ENCODE measurements at regions of chr22 and their contacts with region 1.

Region 1: DNA sequence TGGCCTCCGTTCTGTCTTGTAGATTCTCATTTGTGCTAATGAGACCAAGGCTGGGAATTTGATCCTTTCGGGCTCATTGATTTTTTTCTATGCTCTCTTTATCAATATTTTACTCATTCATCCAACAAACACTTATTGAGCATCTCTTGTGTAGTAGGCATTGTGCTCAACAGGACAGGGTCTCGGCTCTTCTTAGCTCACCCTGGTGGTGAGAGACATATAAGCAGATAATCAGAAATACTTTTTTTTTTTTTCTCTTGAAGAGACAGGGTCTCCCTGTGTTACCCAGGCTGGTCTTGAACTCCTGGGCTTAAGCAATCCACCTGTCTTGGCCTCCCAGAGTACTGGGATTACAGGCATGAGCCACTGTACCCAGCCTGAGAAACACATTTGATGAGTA is 48.0 kb upstream of the SLC5A1 start:
- DNase-seq: no peak
- ATAC-seq: peak; percentile 67
- H3K4me3 ChIP-seq: no peak overlapping the region
- H3K27ac ChIP-seq: no peak overlapping the region
- H3K4me1 ChIP-seq: no peaks in the 10 kb centered on the region
- H3K27me3 ChIP-seq: no peaks in the 10 kb centered on the region; the same call in 1 of the 2 replicates
- CTCF ChIP-seq: peak in 2 of 3 experiments; percentile 47 to 50; a peak in 4 of 6 replicates
- POLR2A ChIP-seq: no peak
- RAD21 ChIP-seq: no peak

Region 2: DNA sequence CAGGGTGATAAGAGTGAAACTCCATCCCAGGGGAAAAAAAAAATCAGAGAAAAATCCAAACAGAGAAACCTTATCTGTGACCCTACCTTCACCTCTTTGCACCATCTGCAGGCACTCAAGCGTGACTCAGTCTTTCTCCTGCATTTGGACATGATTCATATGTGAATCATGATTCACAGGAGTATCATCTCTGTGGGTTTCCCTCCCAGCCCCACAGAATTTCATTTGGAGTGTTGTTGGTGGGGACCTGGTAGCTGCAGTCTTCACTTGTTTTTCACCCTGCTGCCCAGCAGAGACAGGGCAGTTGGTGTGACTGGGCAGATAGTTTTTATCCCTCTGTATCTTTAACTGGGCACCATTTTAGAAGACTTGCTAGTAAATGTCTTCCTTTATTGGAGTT is 165.5 kb before region 1 on chr22:
- CTCF ChIA-PET with region 1: no interaction called
- POLR2A ChIA-PET with region 1: no interaction called
- RAD21 ChIA-PET with region 1: no interaction called
- intact Hi-C with region 1: no loop called
- DNase-seq: peak; percentile 89
- ATAC-seq: peak; percentile 94
- H3K4me3 ChIP-seq: peak overlapping the region in 1 of 2 experiments; percentile 38; a peak in 2 of 4 replicates
- H3K27ac ChIP-seq: peak overlapping the region; percentile 68
- H3K4me1 ChIP-seq: peaks cover 27 to 28% of the 10 kb centered on the region in 2 experiments
- H3K27me3 ChIP-seq: no peaks in the 10 kb centered on the region
- CTCF ChIP-seq: no peak
- POLR2A ChIP-seq: no peak
- RAD21 ChIP-seq: peak; percentile 23

Region 3: GRCh38 chr22:32158712-32159533 is 163.9 kb after region 1 on chr22 and contains the start of gene C22orf42:
- CTCF ChIA-PET with region 1: no interaction called
- POLR2A ChIA-PET with region 1: no interaction called
- RAD21 ChIA-PET with region 1: no interaction called
- intact Hi-C with region 1: no loop called
- DNase-seq: no peak
- ATAC-seq: no peak
- H3K4me3 ChIP-seq: no peak within 1 kb of the TSS
- H3K27ac ChIP-seq: no peak within 1 kb of the TSS
- H3K4me1 ChIP-seq: no peaks in the 10 kb centered on the region
- H3K27me3 ChIP-seq: no peaks in the 10 kb centered on the region
- CTCF ChIP-seq: no peak
- POLR2A ChIP-seq: no peak
- RAD21 ChIP-seq: no peak
- total RNA-seq, gene C22orf42: not detected

Region 4: DNA sequence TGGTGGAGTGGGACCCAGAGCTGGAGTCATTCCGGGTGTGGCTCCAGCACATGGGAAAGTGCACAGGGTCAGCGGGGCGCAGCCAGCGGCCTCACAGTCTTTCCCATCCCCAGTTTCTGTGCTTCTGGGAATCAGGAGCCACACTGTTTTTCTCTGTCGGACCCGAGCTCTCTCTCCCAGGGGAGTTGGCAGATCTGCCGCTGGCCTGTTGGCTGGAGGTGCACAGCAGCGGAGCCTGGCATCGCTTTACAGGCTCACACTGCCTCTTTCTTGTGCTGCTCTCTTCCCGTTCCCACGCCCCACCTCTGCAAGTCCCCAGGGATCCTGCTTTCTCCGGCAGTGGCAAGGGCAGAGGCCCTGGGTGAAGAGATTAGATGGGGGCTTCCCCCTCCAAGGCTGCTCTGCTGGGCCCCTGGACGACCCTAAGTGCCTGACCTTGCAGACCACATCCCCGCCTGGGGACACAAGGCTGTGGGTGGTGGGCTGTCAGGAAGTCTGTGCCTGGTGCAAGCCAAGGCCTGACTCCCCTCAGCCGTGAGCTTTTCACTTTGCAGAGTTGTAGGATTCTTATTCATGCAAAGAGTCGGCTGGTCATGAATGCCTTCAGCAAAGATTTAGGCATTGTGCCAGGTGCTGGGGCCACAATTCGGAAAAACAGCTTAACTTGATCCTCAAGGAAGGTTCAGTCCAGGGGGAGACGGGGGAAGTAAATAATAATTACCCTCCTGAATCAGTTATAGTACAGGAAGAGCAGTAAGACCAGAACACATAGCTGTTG is 922.7 kb after region 1 on chr22:
- CTCF ChIA-PET with region 1: no interaction called
- POLR2A ChIA-PET with region 1: no interaction called
- RAD21 ChIA-PET with region 1: no interaction called
- intact Hi-C with region 1: loop called (anchors 10 kb)
- DNase-seq: no peak
- ATAC-seq: no peak
- H3K4me3 ChIP-seq: no peak overlapping the region
- H3K27ac ChIP-seq: no peak overlapping the region
- H3K4me1 ChIP-seq: peaks cover 5 to 8% of the 10 kb centered on the region in 2 experiments; a peak in 2 of 4 replicates
- H3K27me3 ChIP-seq: peaks cover 11% of the 10 kb centered on the region; the same call in 1 of the 2 replicates
- CTCF ChIP-seq: no peak
- POLR2A ChIP-seq: no peak
- RAD21 ChIP-seq: no peak

Measured in HCT116 (cell line).